Naive thymus-derived CD4-positive, alpha-beta T cell (primary cell): ENCODE measurements at regions of chr17 and their contacts with region 1.

Region 1: DNA sequence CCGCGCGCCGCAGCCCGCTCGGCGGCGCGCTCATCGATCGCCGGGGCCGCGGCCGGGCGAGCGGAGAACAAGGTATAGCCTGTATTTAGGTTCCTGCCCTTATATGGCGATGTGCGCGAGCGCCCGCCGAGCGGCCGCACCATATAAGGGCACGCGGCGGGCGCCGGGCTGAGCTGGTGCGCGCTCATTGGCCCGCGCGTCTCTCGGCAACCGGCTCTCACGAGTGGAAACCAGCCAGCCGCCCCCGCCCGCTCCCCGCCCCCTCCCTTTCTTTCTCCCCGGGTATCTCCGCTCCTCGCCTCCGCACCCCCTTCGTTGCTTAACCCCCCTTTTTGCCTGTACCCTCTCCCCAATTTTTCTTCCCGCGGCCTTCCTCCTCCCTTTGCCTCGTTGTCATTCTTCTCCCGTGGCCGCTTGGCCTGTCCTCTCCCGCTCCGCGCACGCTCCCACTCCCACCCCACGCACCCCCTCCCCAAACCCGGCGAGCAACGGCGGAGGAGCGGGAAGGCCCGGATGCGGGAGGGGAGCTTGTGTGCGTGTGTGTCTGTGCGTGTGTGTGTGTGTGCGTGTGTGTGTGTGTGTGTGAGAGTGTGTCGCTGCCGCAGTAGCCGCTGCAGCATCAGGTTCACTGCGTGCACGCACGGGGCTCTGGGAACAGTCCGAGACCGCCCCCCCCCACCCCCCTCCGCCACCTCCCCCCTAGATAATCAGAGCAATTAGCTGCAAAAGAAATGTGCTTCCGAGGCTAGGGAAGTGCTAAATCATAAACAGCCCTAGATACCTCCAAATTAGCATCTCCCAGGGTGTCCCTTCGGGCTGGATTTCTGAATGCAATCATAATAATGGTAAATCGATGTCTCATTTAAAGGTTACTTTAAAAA is 13.5 kb upstream of the CBX8 start:
- DNase-seq: peak; percentile 56 to 84 (median 74)
- ATAC-seq: peak; percentile 94
- H3K4me3 ChIP-seq: no peak overlapping the region
- H3K4me3 Mint-ChIP-seq: peak overlapping the region in 9 of 10 donors; percentile 39 to 75 (median 55)
- H3K27ac ChIP-seq: no peak overlapping the region
- H3K27ac Mint-ChIP-seq: peak overlapping the region in 4 of 9 donors; percentile 9 to 78 (median 22)
- H3K4me1 ChIP-seq: peaks cover 23 to 40% of the 10 kb centered on the region in 2 donors
- H3K4me1 Mint-ChIP-seq: peaks cover 18 to 40% (median 32%) of the 10 kb centered on the region in 7 donors
- H3K27me3 ChIP-seq: peaks cover 40 to 73% of the 10 kb centered on the region in 2 donors
- H3K27me3 Mint-ChIP-seq: peaks cover 53 to 74% (median 59%) of the 10 kb centered on the region in 5 donors

Region 2: DNA sequence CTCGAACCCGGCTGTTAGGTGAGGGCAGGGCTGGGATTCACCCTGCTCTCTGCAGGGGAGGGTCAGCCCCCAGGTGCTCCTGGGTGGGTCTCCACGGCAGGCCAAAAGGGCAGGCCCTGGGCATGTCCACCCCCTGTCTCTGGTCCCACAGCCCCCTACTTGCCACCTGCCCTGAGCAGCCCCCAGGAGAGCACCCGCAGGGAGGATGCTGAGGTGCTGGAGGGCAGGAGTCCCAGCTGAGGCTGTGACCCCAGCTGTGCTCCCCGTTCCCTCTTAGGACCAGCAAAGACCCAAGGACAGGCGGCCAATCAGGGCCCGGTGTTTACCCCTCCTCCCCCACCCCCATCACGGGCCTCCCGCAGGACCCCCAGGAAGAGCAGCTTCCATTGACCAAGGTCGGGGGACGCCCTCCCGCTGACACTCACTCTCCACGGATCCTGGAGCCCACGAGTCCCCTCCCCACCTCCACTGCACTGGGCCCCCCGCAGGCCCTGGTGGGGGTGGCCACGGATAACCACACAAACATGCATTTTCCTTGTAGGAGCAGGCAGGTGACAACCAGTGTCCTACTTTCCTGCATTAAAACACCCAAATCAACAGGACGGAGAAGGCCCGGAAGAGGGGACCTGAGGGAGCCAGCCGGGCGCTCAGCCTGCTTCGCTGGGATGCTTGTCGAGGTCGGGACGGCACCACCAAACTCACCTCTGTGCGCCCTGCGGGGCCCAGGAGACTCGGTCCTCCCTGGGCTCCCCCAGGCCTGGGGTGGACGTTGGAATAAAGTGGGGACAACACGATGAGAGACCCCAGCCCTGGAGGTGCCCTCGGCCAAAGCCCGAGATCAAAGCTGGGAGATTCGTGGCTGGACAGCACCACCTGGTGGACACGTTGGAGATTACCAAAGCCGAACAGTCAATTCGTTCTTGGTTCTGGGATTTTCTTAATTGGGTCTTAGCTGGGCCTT is 102.2 kb before region 1 on chr17:
- CTCF ChIA-PET with region 1: no interaction called
- POLR2A ChIA-PET with region 1: no interaction called
- intact Hi-C with region 1: no loop called
- DNase-seq: peak; percentile 32 to 66 (median 56)
- ATAC-seq: peak; percentile 80
- H3K4me3 ChIP-seq: no peak overlapping the region
- H3K4me3 Mint-ChIP-seq: peak overlapping the region in 7 of 10 donors; percentile 13 to 69 (median 43)
- H3K27ac ChIP-seq: no peak overlapping the region
- H3K27ac Mint-ChIP-seq: no peak overlapping the region
- H3K4me1 ChIP-seq: peaks cover 0 to 4% of the 10 kb centered on the region in 2 donors
- H3K4me1 Mint-ChIP-seq: peaks cover 0 to 1% (median 0%) of the 10 kb centered on the region in 7 donors
- H3K27me3 ChIP-seq: no peaks in the 10 kb centered on the region
- H3K27me3 Mint-ChIP-seq: peaks cover 0 to 4% (median 0%) of the 10 kb centered on the region in 5 donors

Region 3: DNA sequence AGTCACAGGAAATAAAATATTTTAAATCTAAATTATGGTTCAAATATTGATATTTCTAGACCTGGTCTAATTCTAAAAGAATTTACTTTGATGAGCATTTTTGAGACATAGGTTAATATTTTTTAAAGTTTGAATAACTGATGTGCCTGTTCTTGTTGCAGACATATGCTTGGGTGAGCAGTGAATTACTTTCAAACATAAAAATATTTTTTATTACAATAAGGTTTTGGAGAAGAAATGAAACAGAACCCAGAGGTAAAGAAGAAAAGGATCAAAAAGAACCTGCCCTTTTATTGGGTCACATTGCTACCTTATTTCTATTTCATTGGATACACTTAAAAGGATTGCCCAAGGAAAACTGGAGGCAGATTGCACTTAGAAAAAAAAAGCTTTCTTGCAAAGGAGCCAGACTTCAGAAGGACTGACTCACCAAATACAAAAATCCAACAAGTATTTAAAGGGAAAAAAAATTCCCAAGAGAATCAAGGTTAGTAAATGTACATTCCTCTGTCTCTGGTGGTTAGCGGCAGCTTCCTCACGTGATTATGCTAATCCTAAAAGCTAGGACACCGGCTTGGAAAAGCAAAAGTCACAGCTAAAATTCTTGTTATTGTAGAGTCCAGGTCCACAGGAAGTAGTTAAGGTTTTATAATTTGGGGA is 61.1 kb before region 1 on chr17:
- CTCF ChIA-PET with region 1: interaction called, 9 read pairs
- POLR2A ChIA-PET with region 1: no interaction called
- intact Hi-C with region 1: loop called (anchors 1 to 5 kb)
- DNase-seq: no peak
- ATAC-seq: no peak
- H3K4me3 ChIP-seq: no peak overlapping the region
- H3K4me3 Mint-ChIP-seq: no peak overlapping the region
- H3K27ac ChIP-seq: no peak overlapping the region
- H3K27ac Mint-ChIP-seq: no peak overlapping the region
- H3K4me1 ChIP-seq: peaks cover 0 to 25% of the 10 kb centered on the region in 2 donors
- H3K4me1 Mint-ChIP-seq: peaks cover 0 to 28% (median 21%) of the 10 kb centered on the region in 7 donors
- H3K27me3 ChIP-seq: peaks cover 0 to 19% of the 10 kb centered on the region in 2 donors
- H3K27me3 Mint-ChIP-seq: peaks cover 34 to 60% (median 42%) of the 10 kb centered on the region in 5 donors

Region 4: GRCh38 chr17:79796763-79797491 is 13.4 kb before region 1 on chr17 and contains the start of gene CBX8:
- CTCF ChIA-PET with region 1: interaction called, 4 read pairs
- POLR2A ChIA-PET with region 1: interaction called, 19 read pairs
- intact Hi-C with region 1: loop called (anchors 1 kb)
- DNase-seq: peak; percentile 97 to 99 (median 98)
- ATAC-seq: peak; percentile 95
- H3K4me3 ChIP-seq: peak within 1 kb of the TSS; percentile 54
- H3K4me3 Mint-ChIP-seq: peak within 1 kb of the TSS; percentile 84 to 92 (median 87)
- H3K27ac ChIP-seq: peak within 1 kb of the TSS; percentile 77
- H3K27ac Mint-ChIP-seq: peak within 1 kb of the TSS in 8 of 9 donors; percentile 75 to 95 (median 90)
- H3K4me1 ChIP-seq: peaks cover 31 to 39% of the 10 kb centered on the region in 2 donors
- H3K4me1 Mint-ChIP-seq: peaks cover 17 to 54% (median 34%) of the 10 kb centered on the region in 7 donors
- H3K27me3 ChIP-seq: peaks cover 29 to 32% of the 10 kb centered on the region in 2 donors
- H3K27me3 Mint-ChIP-seq: peaks cover 24 to 51% (median 34%) of the 10 kb centered on the region in 5 donors
- total RNA-seq, gene CBX8: 2.4 to 11.9 (median 3.0) TPM

Region 5: GRCh38 chr17:79991140-79991923 is 181.0 kb after region 1 on chr17:
- CTCF ChIA-PET with region 1: interaction called, 3 read pairs
- POLR2A ChIA-PET with region 1: interaction called, 3 read pairs
- intact Hi-C with region 1: loop called in 1 of 2 experiments (anchors 5 kb)
- DNase-seq: peak; percentile 64 to 84 (median 79)
- ATAC-seq: peak; percentile 96
- H3K4me3 ChIP-seq: peak overlapping the region; percentile 56
- H3K4me3 Mint-ChIP-seq: peak overlapping the region; percentile 42 to 87 (median 78)
- H3K27ac ChIP-seq: peak overlapping the region; percentile 51
- H3K27ac Mint-ChIP-seq: peak overlapping the region in 8 of 9 donors; percentile 52 to 83 (median 62)
- H3K4me1 ChIP-seq: peaks cover 23 to 34% of the 10 kb centered on the region in 2 donors
- H3K4me1 Mint-ChIP-seq: peaks cover 22 to 45% (median 29%) of the 10 kb centered on the region in 7 donors
- H3K27me3 ChIP-seq: no peaks in the 10 kb centered on the region
- H3K27me3 Mint-ChIP-seq: peaks cover 0 to 4% (median 0%) of the 10 kb centered on the region in 5 donors

Region 6: GRCh38 chr17:80101011-80101945 is 290.9 kb after region 1 on chr17 and contains the start of gene GAA:
- CTCF ChIA-PET with region 1: no interaction called
- POLR2A ChIA-PET with region 1: no interaction called
- intact Hi-C with region 1: no loop called
- DNase-seq: peak; percentile 84 to 97 (median 91)
- ATAC-seq: peak; percentile 97
- H3K4me3 ChIP-seq: peak within 1 kb of the TSS; percentile 79
- H3K4me3 Mint-ChIP-seq: peak within 1 kb of the TSS; percentile 85 to 93 (median 90)
- H3K27ac ChIP-seq: peak within 1 kb of the TSS; percentile 86
- H3K27ac Mint-ChIP-seq: peak within 1 kb of the TSS; percentile 81 to 93 (median 86)
- H3K4me1 ChIP-seq: peaks cover 10 to 16% of the 10 kb centered on the region in 2 donors
- H3K4me1 Mint-ChIP-seq: peaks cover 20 to 30% (median 27%) of the 10 kb centered on the region in 7 donors
- H3K27me3 ChIP-seq: no peaks in the 10 kb centered on the region
- H3K27me3 Mint-ChIP-seq: peaks cover 0 to 10% (median 0%) of the 10 kb centered on the region in 5 donors
- total RNA-seq, gene GAA: 18.5 to 67.8 (median 54.6) TPM

Region 7: DNA sequence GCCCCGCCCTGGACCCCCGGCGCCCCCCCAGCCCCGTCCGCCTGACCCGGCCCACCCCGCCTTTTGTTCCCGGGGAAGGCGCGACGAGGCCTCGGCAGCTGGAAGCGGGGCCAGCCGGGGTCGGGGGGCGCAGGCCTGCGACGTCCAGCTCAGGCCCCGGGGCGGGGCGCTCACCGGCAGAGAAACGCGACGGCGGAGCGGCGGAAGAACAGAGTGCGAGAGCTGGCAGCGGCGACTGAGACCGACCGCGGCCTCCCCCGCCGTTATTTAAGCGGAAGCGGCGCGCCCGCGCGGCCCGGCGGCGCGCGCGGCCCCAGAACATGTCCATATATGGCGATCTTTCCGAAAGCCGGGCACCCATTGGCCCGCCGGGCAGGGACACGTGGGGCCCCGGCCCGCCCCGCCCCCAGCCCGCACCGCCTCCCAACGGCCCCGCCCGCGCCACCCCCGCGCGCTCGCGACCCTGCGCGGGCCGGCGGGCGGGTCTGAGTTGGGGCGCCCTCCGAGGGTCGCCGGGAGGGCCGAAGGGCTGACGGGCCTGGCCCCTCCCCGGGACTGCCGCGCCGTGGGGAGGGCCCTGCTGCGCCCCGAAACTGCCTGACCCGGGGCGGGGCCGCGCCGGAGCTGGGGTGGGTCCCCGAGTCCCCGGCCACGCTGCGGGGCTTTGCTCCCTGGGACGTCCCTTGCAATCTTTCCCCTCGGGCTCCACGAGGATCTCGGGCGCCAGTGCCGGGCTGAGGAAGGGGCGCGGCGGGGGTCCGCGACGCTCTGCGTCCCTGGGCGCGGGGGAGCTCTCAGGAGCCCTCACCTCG is 1702.4 kb after region 1 on chr17 and contains the start of gene ACTG1:
- CTCF ChIA-PET with region 1: no interaction called
- POLR2A ChIA-PET with region 1: no interaction called
- intact Hi-C with region 1: loop called in 1 of 2 experiments (anchors 5 kb)
- DNase-seq: peak; percentile 87 to 93 (median 92)
- ATAC-seq: peak; percentile 87
- H3K4me3 ChIP-seq: peak within 1 kb of the TSS; percentile 77
- H3K4me3 Mint-ChIP-seq: peak within 1 kb of the TSS; percentile 91 to 100 (median 98)
- H3K27ac ChIP-seq: peak within 1 kb of the TSS; percentile 79
- H3K27ac Mint-ChIP-seq: peak within 1 kb of the TSS; percentile 92 to 99 (median 95)
- H3K4me1 ChIP-seq: peaks cover 12 to 31% of the 10 kb centered on the region in 2 donors
- H3K4me1 Mint-ChIP-seq: peaks cover 23 to 53% (median 47%) of the 10 kb centered on the region in 7 donors
- H3K27me3 ChIP-seq: no peaks in the 10 kb centered on the region
- H3K27me3 Mint-ChIP-seq: peaks cover 0 to 7% (median 0%) of the 10 kb centered on the region in 5 donors
- total RNA-seq, gene ACTG1: 971 to 4,639 (median 1,185) TPM